Mammary epithelial cell (primary cell): ENCODE measurements at regions of chr12 and their contacts with region 1.

Region 1: GRCh38 chr12:103858953-103859601 is 18.0 kb upstream of the NT5DC3 start:
- DNase-seq: peak; percentile 99
- H3K4me3 ChIP-seq: no peak overlapping the region
- H3K27ac ChIP-seq: peak overlapping the region; percentile 95
- H3K4me1 ChIP-seq: peaks cover 27% of the 10 kb centered on the region
- H3K27me3 ChIP-seq: no peaks in the 10 kb centered on the region
- CTCF ChIP-seq: no peak

Region 2: DNA sequence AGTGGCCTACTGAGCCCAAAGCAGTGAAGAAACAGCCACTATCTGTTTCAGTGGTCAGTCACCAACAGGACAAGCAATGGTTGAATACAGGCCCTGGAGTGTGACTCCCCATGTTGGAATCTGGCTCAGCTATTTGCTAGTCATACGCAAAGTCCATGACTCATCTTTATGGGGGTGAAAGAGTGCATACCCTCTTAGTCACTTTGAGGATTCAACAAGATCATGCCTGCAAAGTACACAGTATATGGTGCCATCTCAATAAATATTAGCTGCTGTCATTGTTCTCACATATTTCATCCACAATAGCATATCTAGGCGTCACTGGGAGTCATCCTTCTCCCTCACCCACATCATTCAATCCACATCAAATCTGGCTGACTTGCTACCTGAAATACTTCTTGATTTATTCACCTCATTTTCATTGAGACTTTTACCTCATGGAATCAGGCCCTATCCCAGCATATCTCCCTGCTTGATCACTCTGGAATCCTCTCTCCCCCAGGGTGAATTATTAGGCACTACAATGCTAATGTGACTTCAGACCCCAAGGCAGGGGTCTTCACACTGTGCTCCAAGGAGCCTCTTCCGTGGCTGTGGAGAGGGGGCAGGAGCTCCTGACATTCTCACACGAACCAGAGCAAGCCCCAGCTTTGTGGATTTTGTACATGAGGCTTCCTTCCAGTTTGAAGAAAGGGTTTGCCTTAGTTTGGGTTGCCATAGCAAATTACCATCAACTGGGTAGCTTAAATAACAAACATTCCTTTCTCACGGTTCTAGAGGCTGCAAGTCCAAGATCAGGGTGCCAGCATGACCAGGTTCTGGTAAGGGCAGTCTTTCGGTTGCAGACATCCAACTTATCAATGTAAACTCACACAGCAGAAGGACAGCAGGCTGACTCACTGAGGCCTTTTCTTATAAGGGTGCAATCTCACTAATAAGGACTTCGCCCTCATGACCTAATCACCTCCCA is 298.2 kb before region 1 on chr12:
- CTCF ChIA-PET with region 1: no interaction called
- dilution Hi-C with region 1: no loop called
- in situ Hi-C with region 1: loop called in 1 of 2 experiments (anchors 25 kb)
- intact Hi-C with region 1: no loop called
- DNase-seq: peak; percentile 100
- H3K4me3 ChIP-seq: no peak overlapping the region
- H3K27ac ChIP-seq: peak overlapping the region; percentile 98
- H3K4me1 ChIP-seq: peaks cover 35% of the 10 kb centered on the region
- H3K27me3 ChIP-seq: no peaks in the 10 kb centered on the region
- CTCF ChIP-seq: no peak

Region 3: DNA sequence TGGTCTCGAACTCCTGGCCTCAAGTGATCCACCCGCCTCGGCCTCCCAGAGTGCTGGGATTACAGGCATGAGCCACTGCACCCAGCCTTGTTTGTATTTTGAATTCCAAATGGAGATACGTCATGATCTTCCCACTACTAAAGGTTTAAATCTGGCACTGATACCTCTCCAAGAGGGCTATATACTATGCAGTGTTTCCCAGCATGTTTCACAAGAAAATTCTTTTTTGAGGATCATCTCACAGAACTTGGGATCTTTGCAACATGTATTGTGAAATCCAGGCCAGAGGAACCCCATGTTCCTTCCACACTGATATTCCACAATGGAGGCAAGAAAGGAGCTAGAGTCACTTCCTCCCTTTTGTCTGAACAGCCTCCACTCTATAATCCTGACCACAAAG is 130.8 kb before region 1 on chr12:
- CTCF ChIA-PET with region 1: no interaction called
- dilution Hi-C with region 1: no loop called
- in situ Hi-C with region 1: no loop called
- intact Hi-C with region 1: no loop called
- DNase-seq: no peak
- H3K4me3 ChIP-seq: no peak overlapping the region
- H3K27ac ChIP-seq: no peak overlapping the region
- H3K4me1 ChIP-seq: no peaks in the 10 kb centered on the region
- H3K27me3 ChIP-seq: no peaks in the 10 kb centered on the region
- CTCF ChIP-seq: no peak

Region 4: GRCh38 chr12:103840876-103841689 is 18.0 kb before region 1 on chr12 and contains the start of gene NT5DC3:
- CTCF ChIA-PET with region 1: no interaction called
- dilution Hi-C with region 1: no loop called
- in situ Hi-C with region 1: no loop called
- intact Hi-C with region 1: loop called (anchors 1 kb)
- DNase-seq: peak; percentile 85
- H3K4me3 ChIP-seq: peak within 1 kb of the TSS; percentile 71 to 87 (median 84)
- H3K27ac ChIP-seq: peak within 1 kb of the TSS; percentile 95
- H3K4me1 ChIP-seq: peaks cover 16% of the 10 kb centered on the region
- H3K27me3 ChIP-seq: no peaks in the 10 kb centered on the region
- CTCF ChIP-seq: no peak
- total RNA-seq, gene NT5DC3: 46.4 to 98.5 TPM